ENCODE measurements at regions of chr5 and their contacts with region 1.

Region 1: GRCh38 chr5:54492178-54492577 is 25.4 kb upstream of the SNX18 start:
- DNase-seq: no peak
- ATAC-seq: no peak
- H3K4me3 ChIP-seq: no peak overlapping the region
- H3K27ac ChIP-seq: no peak overlapping the region
- H3K4me1 ChIP-seq: peaks cover 4% of the 10 kb centered on the region
- H3K27me3 ChIP-seq: peaks cover 0 to 4% (median 0%) of the 10 kb centered on the region in 3 donors
- CTCF ChIP-seq: no peak

Region 2: GRCh38 chr5:54443270-54443669 is 48.9 kb before region 1 on chr5:
- intact Hi-C with region 1: loop called (anchors 2 to 5 kb)
- DNase-seq: no peak
- ATAC-seq: peak in 2 of 4 donors; percentile 43 to 46
- H3K4me3 ChIP-seq: no peak overlapping the region
- H3K27ac ChIP-seq: no peak overlapping the region
- H3K4me1 ChIP-seq: no peaks in the 10 kb centered on the region
- H3K27me3 ChIP-seq: no peaks in the 10 kb centered on the region
- CTCF ChIP-seq: peak; percentile 34

Measured in psoas muscle (tissue), 8 donors.